Psoas muscle (tissue), 8 donors: ENCODE measurements at regions of chr12 and their contacts with region 1.

Region 1: DNA sequence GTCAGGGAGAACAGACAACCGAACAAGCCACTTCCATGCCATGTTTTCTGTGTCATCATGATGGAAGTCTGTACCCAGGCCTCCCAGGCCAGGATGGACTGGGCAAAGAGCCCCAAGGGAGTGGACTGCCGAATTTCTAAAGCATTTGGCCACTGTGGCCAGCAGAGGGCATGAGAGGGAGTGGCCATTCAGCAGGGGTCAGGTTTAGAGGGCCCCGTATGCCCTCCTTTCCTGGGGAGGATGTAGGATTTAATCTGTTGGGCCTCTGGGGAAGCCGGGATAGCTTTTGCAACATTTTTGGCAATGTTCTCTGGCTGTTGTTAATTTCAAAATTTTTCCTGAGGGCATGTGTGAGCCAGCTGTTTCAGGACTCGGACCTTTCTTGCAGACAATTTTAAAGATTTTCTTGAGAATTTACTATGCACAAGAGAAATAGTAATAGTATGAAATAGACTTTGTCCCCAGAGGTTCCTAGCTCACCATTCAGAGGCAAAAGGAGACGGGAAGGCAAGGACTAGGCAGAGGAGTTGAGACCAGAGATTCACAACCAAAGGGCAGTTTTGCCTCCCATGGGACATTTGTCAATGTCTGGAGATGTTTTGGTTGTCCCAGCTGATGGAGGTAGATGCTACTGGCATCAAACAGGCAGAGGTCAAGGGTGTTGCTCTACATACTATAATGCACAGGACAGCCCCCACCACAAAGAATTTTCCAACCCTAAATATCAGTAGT is 18.0 kb downstream of the ACACB start:
- DNase-seq: peak; percentile 73 to 90
- ATAC-seq: peak in 3 of 4 donors; percentile 28 to 35 (median 32)
- H3K4me3 ChIP-seq: peak overlapping the region; percentile 35
- H3K27ac ChIP-seq: peak overlapping the region; percentile 96
- H3K4me1 ChIP-seq: peaks cover 70% of the 10 kb centered on the region
- H3K27me3 ChIP-seq: no peaks in the 10 kb centered on the region
- CTCF ChIP-seq: peak; percentile 49

Region 2: DNA sequence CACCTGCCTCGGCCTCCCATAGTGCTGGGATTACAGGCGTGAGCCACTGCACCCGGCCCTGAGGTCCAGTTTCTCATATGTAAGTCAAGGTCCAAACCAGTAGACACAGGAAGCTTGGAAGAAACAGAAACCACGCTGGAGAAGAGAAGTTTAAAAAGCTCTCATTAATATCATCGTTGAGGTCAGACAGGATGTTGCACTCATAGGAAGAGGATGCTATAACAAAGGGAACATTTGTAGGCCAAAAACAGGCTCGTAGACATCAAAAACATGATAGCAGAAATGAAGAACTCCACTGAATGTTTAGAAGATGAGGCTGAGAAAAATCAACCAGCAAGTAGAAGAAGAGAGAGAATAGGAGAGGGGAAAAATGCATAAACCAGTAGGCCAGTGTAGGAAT is 28.8 kb after region 1 on chr12:
- intact Hi-C with region 1: loop called in 1 of 2 experiments (anchors 1 kb)
- DNase-seq: no peak
- ATAC-seq: no peak
- H3K4me3 ChIP-seq: no peak overlapping the region
- H3K27ac ChIP-seq: peak overlapping the region; percentile 65
- H3K4me1 ChIP-seq: peaks cover 31% of the 10 kb centered on the region
- H3K27me3 ChIP-seq: no peaks in the 10 kb centered on the region
- CTCF ChIP-seq: no peak